Activated T-helper 1 cell treated with anti-CD3 and anti-CD28 coated beads, Interleukin-12 subunit alpha, Interleukin-12 subunit beta, Interleukin-2, Interleukin-4 antibody, amounts not matched to agents 30 ng/mL and 10 ng/mL and 1 ng/mL, durations not matched to agents 14 hours and 24 hours and 36 hours (primary cell): ENCODE measurements at regions of chr14 and their contacts with region 1.

Region 1: GRCh38 chr14:100067971-100068959 is 3.0 kb downstream of the EVL start:
- DNase-seq: peak; percentile 82
- H3K4me3 Mint-ChIP-seq: peak overlapping the region; percentile 88
- H3K27ac Mint-ChIP-seq: peak overlapping the region; percentile 99
- H3K4me1 Mint-ChIP-seq: peaks cover 84% of the 10 kb centered on the region
- H3K27me3 Mint-ChIP-seq: no peaks in the 10 kb centered on the region

Region 2: GRCh38 chr14:99245564-99246511 is 822.4 kb before region 1 on chr14:
- intact Hi-C with region 1: loop called (anchors 10 kb)
- DNase-seq: no peak
- H3K4me3 Mint-ChIP-seq: peak overlapping the region; percentile 82
- H3K27ac Mint-ChIP-seq: peak overlapping the region; percentile 99
- H3K4me1 Mint-ChIP-seq: peaks cover 87% of the 10 kb centered on the region
- H3K27me3 Mint-ChIP-seq: no peaks in the 10 kb centered on the region

Region 3: GRCh38 chr14:99683619-99684355 is 384.5 kb before region 1 on chr14 and contains the start of gene CYP46A1:
- intact Hi-C with region 1: loop called (anchors 10 kb)
- DNase-seq: peak; percentile 99
- H3K4me3 Mint-ChIP-seq: peak within 1 kb of the TSS; percentile 87
- H3K27ac Mint-ChIP-seq: peak within 1 kb of the TSS; percentile 87
- H3K4me1 Mint-ChIP-seq: peaks cover 5% of the 10 kb centered on the region
- H3K27me3 Mint-ChIP-seq: peaks cover 31% of the 10 kb centered on the region
- total RNA-seq, gene CYP46A1: 0.27 TPM in 1 of 2 replicates, not detected in the other

Region 4: DNA sequence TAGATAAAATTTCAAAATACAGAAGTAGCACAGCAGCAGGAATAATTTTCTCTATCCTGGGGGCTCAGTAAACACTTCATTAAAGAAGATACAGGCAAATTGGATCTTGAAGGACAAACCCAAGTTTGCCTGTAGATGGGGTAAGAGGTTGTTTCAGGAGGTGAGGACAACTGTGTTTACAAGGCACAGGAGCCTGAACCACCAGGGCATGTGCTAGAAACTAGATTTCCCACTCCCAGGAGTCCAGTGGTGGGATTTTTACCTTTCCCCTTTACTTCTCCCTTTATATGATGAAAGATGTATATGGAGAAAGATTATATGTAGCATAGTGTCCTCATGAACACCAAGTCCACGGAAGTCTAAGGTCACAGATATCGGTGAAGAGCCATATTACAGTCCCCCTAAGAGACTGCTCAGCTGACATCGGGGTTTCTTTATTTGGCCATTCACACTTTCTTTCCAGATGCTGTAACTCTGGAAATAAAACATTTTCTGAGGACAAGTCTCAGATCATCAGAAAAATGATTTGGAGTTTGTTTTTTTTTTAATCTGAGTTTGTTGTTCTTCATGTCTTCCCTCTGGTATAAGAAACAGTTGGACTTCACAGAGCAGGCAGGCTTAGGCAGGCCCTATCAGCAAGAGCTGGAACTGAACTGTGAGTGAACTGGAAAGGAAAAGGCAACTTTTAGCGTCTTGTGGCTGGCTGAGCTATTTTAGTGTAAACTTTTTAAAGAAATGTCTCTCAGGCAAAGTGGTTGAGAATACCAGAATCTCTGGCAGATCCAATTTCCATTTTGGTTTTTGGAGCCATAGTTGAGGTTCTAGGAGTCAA is 11.1 kb before region 1 on chr14:
- intact Hi-C with region 1: loop called (anchors 1 kb)
- DNase-seq: no peak
- H3K4me3 Mint-ChIP-seq: peak overlapping the region; percentile 62
- H3K27ac Mint-ChIP-seq: peak overlapping the region; percentile 75
- H3K4me1 Mint-ChIP-seq: peaks cover 69% of the 10 kb centered on the region
- H3K27me3 Mint-ChIP-seq: no peaks in the 10 kb centered on the region

Region 5: DNA sequence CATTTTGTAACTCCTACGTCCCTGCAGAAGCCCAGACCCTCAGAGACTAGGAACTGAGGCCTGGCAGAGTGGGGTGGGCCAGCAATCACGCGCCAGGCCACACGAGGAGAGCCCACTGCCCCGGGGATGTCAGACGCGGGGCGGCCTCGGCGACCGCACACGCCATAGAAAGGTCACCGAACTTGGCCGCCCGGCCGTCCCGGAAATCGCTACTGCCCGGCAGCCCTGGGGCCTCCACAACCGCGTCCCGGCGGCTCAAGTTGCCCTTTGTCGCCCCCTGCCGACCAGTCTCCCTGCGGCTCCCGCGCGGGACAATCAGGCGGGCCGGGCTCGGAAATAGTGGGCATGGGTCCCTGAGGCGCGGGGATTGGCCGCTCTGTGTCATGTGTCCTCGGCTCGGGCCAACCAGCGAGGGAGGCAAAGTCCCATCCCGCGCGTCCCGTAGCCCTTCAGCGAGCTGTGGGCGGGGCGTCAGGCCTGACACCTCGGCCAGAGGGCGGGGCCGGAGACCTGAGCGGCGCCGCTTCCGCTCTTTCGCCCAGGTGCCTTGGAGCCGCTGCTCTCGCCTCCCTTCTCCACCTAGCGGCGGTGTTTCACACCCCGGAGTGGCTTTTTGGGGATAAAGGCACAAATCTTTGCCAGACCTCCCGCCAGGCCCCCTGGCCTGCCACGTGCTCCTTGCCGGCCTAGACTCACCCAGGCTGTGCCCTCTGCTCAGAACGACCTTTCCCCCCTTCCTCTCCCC is 124.6 kb after region 1 on chr14:
- intact Hi-C with region 1: loop called (anchors 1 kb)
- DNase-seq: peak; percentile 100
- H3K4me3 Mint-ChIP-seq: peak overlapping the region; percentile 60
- H3K27ac Mint-ChIP-seq: peak overlapping the region; percentile 67
- H3K4me1 Mint-ChIP-seq: peaks cover 6% of the 10 kb centered on the region
- H3K27me3 Mint-ChIP-seq: no peaks in the 10 kb centered on the region

Region 6: GRCh38 chr14:100406505-100407131 is 338.4 kb after region 1 on chr14:
- intact Hi-C with region 1: no loop called
- DNase-seq: peak; percentile 11
- H3K4me3 Mint-ChIP-seq: no peak overlapping the region
- H3K27ac Mint-ChIP-seq: peak overlapping the region; percentile 78
- H3K4me1 Mint-ChIP-seq: peaks cover 22% of the 10 kb centered on the region
- H3K27me3 Mint-ChIP-seq: no peaks in the 10 kb centered on the region

Region 7: DNA sequence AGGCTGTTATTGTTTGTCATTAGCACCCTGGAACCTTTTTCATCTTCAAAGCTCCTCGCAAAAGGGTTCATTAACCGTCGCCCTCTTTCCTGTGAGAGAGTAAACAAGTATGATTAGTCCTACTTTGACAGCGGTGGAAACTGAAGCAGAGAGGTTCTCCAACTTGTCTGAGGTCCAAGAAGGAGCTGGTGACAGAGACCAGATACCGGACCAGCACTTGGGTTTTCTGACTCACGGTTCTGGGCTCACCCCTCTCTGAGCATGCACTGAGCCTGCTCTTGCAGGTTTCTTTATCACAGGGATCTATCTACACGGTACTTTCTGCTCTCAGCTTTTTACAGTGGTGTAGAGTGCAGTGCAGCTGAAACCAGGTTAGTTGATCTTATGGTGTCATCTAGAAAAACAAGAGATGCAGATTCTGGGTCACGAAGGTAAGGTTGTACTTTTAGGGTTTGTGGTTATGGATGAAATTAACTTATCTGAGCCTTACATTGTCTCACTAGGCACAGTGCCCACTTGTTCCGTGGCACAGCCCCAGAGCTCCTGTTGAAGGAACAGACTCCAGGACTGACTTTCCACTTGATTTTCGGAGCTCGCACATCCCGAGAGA is 1755.4 kb after region 1 on chr14:
- intact Hi-C with region 1: loop called (anchors 5 kb)
- DNase-seq: peak; percentile 74
- H3K4me3 Mint-ChIP-seq: peak overlapping the region; percentile 78
- H3K27ac Mint-ChIP-seq: peak overlapping the region; percentile 98
- H3K4me1 Mint-ChIP-seq: peaks cover 84% of the 10 kb centered on the region
- H3K27me3 Mint-ChIP-seq: no peaks in the 10 kb centered on the region